ENCODE measurements at regions of chr17 and their contacts with region 1.

Region 1: GRCh38 chr17:41930009-41930832 is at the start of gene ODAD4:
- DNase-seq: peak; percentile 92
- ATAC-seq: peak; percentile 98
- H3K4me3 ChIP-seq: peak within 1 kb of the TSS; percentile 65
- H3K27ac ChIP-seq: peak within 1 kb of the TSS; percentile 62
- H3K4me1 ChIP-seq: 0 out of 2 replicates have a peak, but pooled peaks cover 6% of the 10 kb centered on the region
- H3K27me3 ChIP-seq: no peaks in the 10 kb centered on the region
- CTCF ChIP-seq: peak; percentile 47
- total RNA-seq, gene ODAD4: 0.15 and 0.98 TPM in 2 replicates

Region 2: GRCh38 chr17:42075789-42076188 is 145.6 kb after region 1 on chr17:
- CTCF ChIA-PET with region 1: no interaction called
- POLR2A ChIA-PET with region 1: interaction called, 12 read pairs
- intact Hi-C with region 1: no loop called
- DNase-seq: no peak
- ATAC-seq: no peak
- H3K4me3 ChIP-seq: no peak overlapping the region
- H3K27ac ChIP-seq: no peak overlapping the region
- H3K4me1 ChIP-seq: no peaks in the 10 kb centered on the region
- H3K27me3 ChIP-seq: 0 out of 2 replicates have a peak, but pooled peaks cover 8% of the 10 kb centered on the region
- CTCF ChIP-seq: no peak

Measured in PC-3 (cell line).